PC-3 (cell line): ENCODE measurements at regions of chr1 and their contacts with region 1.

Region 1: GRCh38 chr1:80083877-80084276 is 1077.3 kb upstream of the ADGRL4 start:
- DNase-seq: peak; percentile 80
- ATAC-seq: peak; percentile 94
- H3K4me3 ChIP-seq: no peak overlapping the region
- H3K27ac ChIP-seq: peak overlapping the region; percentile 48
- H3K4me1 ChIP-seq: peaks cover 20% of the 10 kb centered on the region
- H3K27me3 ChIP-seq: no peaks in the 10 kb centered on the region
- CTCF ChIP-seq: no peak

Region 2: GRCh38 chr1:79726321-79726720 is 357.6 kb before region 1 on chr1:
- CTCF ChIA-PET with region 1: no interaction called
- POLR2A ChIA-PET with region 1: no interaction called
- intact Hi-C with region 1: loop called (anchors 10 kb)
- DNase-seq: no peak
- ATAC-seq: no peak
- H3K4me3 ChIP-seq: no peak overlapping the region
- H3K27ac ChIP-seq: no peak overlapping the region
- H3K4me1 ChIP-seq: no peaks in the 10 kb centered on the region
- H3K27me3 ChIP-seq: no peaks in the 10 kb centered on the region
- CTCF ChIP-seq: no peak

Region 3: DNA sequence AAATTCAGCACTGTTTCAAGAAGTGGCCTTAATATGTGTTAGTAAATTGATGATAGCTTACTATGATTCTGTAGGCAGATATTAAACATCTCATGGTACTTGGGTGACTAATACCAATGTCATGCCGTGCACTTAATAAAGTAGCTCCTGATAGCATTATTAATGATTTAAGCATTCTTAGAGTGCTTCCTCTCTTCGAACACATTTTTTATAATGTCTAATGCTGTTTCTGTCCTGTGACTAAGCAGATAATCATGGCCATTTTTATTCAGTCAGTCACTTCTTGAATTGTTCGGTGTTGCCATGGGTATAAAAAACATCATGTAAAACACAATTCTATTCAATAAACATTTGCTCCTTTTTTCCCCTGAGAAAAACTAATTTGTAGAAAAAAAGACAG is 272.7 kb before region 1 on chr1:
- CTCF ChIA-PET with region 1: no interaction called
- POLR2A ChIA-PET with region 1: no interaction called
- intact Hi-C with region 1: loop called (anchors 10 kb)
- DNase-seq: peak; percentile 68
- ATAC-seq: peak; percentile 89
- H3K4me3 ChIP-seq: no peak overlapping the region
- H3K27ac ChIP-seq: peak overlapping the region; percentile 58
- H3K4me1 ChIP-seq: peaks cover 11% of the 10 kb centered on the region
- H3K27me3 ChIP-seq: no peaks in the 10 kb centered on the region
- CTCF ChIP-seq: no peak

Region 4: DNA sequence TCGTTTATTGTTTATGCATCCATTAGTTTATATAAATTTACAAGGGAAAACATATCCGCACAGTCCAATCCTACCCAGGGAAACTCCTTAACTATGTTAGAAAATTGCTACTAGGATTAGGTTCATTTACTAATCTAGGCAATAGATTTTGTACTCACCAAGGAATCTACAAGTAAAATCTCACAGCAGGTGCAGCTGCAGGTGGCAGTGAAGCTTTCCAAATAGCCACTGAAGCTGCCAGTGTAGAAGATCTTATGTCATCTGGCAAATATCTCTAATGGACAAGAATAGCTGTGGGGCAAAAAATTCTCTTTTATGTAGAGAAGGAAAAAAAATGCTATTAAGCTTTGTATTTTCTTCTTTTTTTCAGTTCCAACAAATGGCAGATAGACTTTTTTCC is 114.0 kb before region 1 on chr1:
- CTCF ChIA-PET with region 1: no interaction called
- POLR2A ChIA-PET with region 1: no interaction called
- intact Hi-C with region 1: loop called (anchors 1 kb)
- DNase-seq: no peak
- ATAC-seq: no peak
- H3K4me3 ChIP-seq: no peak overlapping the region
- H3K27ac ChIP-seq: no peak overlapping the region
- H3K4me1 ChIP-seq: peaks cover 11% of the 10 kb centered on the region
- H3K27me3 ChIP-seq: no peaks in the 10 kb centered on the region
- CTCF ChIP-seq: no peak

Region 5: DNA sequence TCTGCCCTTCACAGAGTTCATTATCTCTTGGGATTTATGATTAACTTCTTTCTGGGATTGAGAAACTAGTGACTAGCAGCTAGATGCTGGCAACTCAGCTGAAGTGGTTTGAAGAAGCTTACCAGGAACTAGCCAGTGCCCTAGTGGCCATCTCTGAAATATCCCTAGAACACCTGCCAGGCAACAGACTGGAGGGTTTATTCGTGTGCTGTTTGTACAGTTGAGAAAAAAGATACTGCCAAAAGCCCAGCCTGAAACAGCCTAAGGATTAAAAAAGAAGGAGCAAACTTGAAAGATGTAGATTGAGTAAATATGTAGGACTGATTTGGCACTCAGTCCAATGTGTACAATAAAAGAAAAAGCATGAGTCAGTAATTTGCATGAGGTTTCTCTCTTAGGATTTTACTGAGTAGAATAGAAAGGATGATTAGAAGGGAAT is 572.2 kb after region 1 on chr1:
- CTCF ChIA-PET with region 1: no interaction called
- POLR2A ChIA-PET with region 1: no interaction called
- intact Hi-C with region 1: loop called (anchors 10 kb)
- DNase-seq: peak; percentile 59
- ATAC-seq: peak; percentile 94
- H3K4me3 ChIP-seq: no peak overlapping the region
- H3K27ac ChIP-seq: peak overlapping the region; percentile 68
- H3K4me1 ChIP-seq: peaks cover 11% of the 10 kb centered on the region; the same call in 1 of the 2 replicates
- H3K27me3 ChIP-seq: no peaks in the 10 kb centered on the region
- CTCF ChIP-seq: peak; percentile 60